Activated CD4-positive, alpha-beta memory T cell treated with anti-CD3 and anti-CD28 coated beads for 36 hours (primary cell): ENCODE measurements at regions of chr10 and their contacts with region 1.

Region 1: DNA sequence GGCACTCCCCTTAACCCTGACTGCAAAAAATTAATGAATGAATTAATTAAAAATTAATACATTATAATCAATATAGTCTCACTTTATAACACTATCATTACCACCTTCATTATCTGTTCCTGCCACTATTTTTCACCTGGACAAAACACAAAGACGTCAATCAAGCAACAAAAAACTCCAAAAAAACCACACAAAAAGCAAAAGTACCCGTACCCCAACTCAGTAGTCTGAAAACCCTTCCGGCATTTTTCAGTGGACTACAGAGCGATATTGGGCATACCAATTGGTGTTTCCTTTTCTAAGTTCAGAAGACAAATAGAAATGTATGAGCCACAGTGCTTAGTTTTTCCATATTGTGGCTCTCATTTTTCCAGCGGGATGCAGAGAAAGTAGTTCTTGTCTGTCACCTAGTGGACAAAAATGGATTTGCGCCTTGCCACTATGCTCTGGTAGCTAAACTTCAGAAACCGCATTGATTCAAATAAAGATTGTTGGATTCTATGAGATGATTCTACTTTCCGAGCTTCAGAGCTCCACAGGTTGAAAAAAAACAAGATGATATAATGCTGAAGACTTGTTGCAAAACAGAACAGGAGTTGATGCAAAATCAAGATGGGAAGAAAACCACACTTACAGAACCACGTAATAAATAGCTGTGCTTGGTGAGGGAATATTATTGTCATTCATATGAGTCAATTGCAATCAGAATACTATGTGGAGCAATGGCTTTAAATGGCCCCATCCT is 50.6 kb upstream of the ITGB1 start:
- DNase-seq: peak; percentile 79
- H3K4me3 Mint-ChIP-seq: peak overlapping the region; percentile 66
- H3K27ac Mint-ChIP-seq: peak overlapping the region; percentile 76
- H3K4me1 Mint-ChIP-seq: peaks cover 43% of the 10 kb centered on the region
- H3K27me3 Mint-ChIP-seq: no peaks in the 10 kb centered on the region

Region 2: DNA sequence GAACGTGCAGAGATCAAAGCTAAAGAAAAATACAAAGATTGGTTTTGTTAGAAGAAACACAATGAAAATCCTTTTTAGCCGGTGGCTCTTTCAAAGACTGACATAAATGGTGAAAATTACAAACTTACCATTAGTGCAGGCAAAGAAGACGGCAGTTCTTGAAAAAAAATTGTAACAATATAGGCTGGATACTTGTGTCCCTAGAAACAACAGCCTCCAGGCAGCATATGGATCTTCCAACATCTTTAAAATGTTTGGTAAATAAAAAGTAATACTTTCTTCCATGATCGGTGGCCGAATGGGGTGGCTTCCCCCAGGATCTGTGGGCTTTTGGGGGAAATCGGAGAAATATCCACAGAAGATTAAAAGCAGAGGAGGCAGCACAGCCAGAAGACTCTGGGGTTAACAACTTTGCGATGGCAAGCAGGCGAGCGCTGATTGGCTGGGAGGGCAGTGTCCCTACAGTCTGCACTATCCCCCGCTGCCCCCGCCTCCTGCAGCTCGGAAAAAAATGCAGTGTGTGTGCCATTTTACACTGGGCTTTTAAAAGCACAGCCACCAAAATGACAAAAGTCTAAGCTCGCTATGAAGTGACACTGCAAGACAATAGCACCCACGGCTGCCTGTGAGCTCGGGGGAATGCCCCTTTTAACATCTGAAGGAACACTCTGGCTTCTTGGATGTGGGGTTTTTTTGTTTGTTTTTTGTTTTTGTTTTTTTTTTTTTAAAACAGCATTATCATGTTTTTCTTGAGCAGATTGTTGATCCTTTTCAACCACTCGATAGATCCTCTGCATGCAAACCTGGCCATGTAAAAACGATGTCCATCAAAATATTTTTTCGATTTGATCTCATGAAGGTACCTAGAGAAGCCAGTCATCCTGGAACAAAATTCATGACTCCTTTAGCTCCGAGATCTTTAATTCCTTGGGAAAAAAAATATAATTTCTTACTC is 630.0 kb before region 1 on chr10:
- CTCF ChIA-PET with region 1: no interaction called
- POLR2A ChIA-PET with region 1: no interaction called
- intact Hi-C with region 1: loop called (anchors 2 kb)
- DNase-seq: peak; percentile 96
- H3K4me3 Mint-ChIP-seq: no peak overlapping the region
- H3K27ac Mint-ChIP-seq: no peak overlapping the region
- H3K4me1 Mint-ChIP-seq: peaks cover 22% of the 10 kb centered on the region
- H3K27me3 Mint-ChIP-seq: no peaks in the 10 kb centered on the region

Region 3: GRCh38 chr10:32445740-32446535 is 562.7 kb before region 1 on chr10 and contains the start of gene CCDC7:
- CTCF ChIA-PET with region 1: interaction called, 3 read pairs
- POLR2A ChIA-PET with region 1: no interaction called
- intact Hi-C with region 1: loop called (anchors 2 kb)
- DNase-seq: peak; percentile 89
- H3K4me3 Mint-ChIP-seq: peak within 1 kb of the TSS; percentile 89
- H3K27ac Mint-ChIP-seq: peak within 1 kb of the TSS; percentile 96
- H3K4me1 Mint-ChIP-seq: peaks cover 13% of the 10 kb centered on the region
- H3K27me3 Mint-ChIP-seq: no peaks in the 10 kb centered on the region
- total RNA-seq, gene CCDC7: 8.6 to 11.6 TPM

Region 4: GRCh38 chr10:32980558-32981468 is 27.9 kb before region 1 on chr10:
- CTCF ChIA-PET with region 1: interaction called, 14 read pairs
- POLR2A ChIA-PET with region 1: interaction called, 4 read pairs
- intact Hi-C with region 1: loop called (anchors 1 kb)
- DNase-seq: peak; percentile 93
- H3K4me3 Mint-ChIP-seq: peak overlapping the region; percentile 85
- H3K27ac Mint-ChIP-seq: peak overlapping the region; percentile 90
- H3K4me1 Mint-ChIP-seq: peaks cover 34% of the 10 kb centered on the region
- H3K27me3 Mint-ChIP-seq: no peaks in the 10 kb centered on the region

Region 5: DNA sequence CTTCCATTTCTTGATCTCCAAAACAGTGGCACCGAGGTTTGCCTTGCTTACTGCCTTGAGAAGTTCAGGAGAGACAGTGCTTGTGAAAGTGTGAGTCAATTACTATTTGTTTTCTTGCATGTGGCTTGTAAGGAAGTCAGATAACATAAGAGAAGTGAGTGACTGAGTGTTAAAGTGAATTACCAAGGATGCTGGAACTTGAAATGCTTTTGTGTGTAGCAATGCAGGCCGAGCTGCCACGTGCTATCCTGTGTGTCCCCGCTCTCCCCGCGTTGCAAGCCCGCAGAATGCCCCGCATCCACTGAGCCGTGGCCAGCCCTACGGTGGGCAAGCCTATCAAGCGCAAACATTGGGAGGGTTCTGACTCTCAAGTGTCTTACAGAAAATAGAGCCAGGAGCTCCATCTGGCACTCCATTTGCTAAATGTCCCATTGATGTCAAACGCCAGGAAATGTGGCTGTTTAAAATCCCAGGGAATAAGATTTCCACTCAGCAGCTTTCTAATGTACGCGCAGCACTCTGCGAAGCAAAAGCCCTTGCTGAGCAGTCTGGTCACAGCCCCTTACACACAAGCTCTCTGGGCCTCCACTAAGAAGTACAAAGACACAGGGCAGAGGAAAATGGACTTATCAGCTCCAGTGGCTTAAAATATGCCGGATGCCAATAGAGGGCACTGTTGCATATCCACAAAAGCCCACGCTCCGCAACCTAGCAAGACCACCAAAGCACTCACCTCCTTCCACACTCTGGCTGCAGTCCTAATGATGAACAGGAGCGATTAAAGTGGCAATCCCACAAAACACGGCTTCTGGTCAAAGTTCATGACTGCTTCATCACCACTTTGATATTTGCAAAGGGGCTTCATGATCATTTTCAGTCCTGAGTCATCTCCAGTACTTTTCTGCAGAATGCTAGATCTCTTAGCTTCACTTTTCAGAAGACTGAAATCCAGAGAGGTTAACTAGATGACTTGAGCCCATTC is 107.4 kb after region 1 on chr10:
- CTCF ChIA-PET with region 1: interaction called, 10 read pairs
- POLR2A ChIA-PET with region 1: interaction called, 3 read pairs
- intact Hi-C with region 1: loop called (anchors 1 kb)
- DNase-seq: peak; percentile 53
- H3K4me3 Mint-ChIP-seq: peak overlapping the region; percentile 47
- H3K27ac Mint-ChIP-seq: peak overlapping the region; percentile 81
- H3K4me1 Mint-ChIP-seq: peaks cover 92% of the 10 kb centered on the region
- H3K27me3 Mint-ChIP-seq: peaks cover 4% of the 10 kb centered on the region

Region 6: GRCh38 chr10:33155720-33156638 is 147.3 kb after region 1 on chr10:
- CTCF ChIA-PET with region 1: interaction called, 50 read pairs
- POLR2A ChIA-PET with region 1: no interaction called
- intact Hi-C with region 1: loop called (anchors 1 kb)
- DNase-seq: peak; percentile 53
- H3K4me3 Mint-ChIP-seq: no peak overlapping the region
- H3K27ac Mint-ChIP-seq: no peak overlapping the region
- H3K4me1 Mint-ChIP-seq: peaks cover 46% of the 10 kb centered on the region
- H3K27me3 Mint-ChIP-seq: no peaks in the 10 kb centered on the region